Calu3 (cell line): ENCODE measurements at regions of chr4 and their contacts with region 1.

Region 1: GRCh38 chr4:74133786-74134499 is 24.0 kb upstream of the MTHFD2L start:
- DNase-seq: peak; percentile 77
- H3K4me3 Mint-ChIP-seq: peak overlapping the region; percentile 30
- H3K27ac Mint-ChIP-seq: peak overlapping the region; percentile 24
- H3K4me1 Mint-ChIP-seq: peaks cover 25% of the 10 kb centered on the region
- H3K27me3 Mint-ChIP-seq: no peaks in the 10 kb centered on the region
- CTCF ChIP-seq: peak; percentile 38

Region 2: GRCh38 chr4:73662709-73663546 is 471.0 kb before region 1 on chr4:
- CTCF ChIA-PET with region 1: no interaction called
- intact Hi-C with region 1: loop called (anchors 5 kb)
- DNase-seq: no peak
- H3K4me3 Mint-ChIP-seq: no peak overlapping the region
- H3K27ac Mint-ChIP-seq: peak overlapping the region; percentile 50
- H3K4me1 Mint-ChIP-seq: peaks cover 33% of the 10 kb centered on the region
- H3K27me3 Mint-ChIP-seq: no peaks in the 10 kb centered on the region
- CTCF ChIP-seq: peak; percentile 28

Region 3: DNA sequence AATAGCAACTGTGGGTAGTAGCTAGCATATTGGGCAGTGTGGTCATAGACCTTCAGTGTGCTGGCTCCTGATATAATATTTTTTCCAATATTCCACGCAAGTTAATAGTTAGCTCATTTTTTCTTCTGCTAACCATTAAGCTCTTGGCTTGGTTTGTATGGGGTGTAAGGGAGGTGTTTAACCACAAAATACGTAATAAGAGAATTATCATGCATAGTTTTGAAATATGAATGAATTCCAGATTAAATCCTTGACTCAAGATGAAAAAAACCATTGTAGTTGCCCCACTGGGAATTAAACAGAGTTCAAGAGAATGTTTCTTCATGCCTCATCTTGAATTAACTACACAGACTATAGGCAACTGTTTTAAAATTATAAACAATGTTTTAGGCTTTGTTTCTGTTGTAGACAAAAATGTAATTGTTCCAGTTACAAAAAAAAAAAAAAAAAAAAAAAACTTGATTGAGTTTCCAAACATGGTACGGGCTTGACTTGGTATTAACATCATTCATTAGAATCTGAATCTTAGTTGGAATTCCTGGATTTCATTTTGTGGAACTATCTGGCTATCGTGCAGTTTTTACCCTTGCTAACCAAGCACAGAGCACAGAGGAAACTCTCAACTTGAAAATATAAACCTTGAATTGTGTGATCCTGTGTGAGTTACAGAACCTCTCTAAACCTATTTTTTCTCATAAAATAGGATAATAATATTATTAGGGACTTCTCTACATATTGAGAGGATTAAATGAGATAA is 236.4 kb before region 1 on chr4:
- CTCF ChIA-PET with region 1: no interaction called
- intact Hi-C with region 1: no loop called
- DNase-seq: peak; percentile 10
- H3K4me3 Mint-ChIP-seq: no peak overlapping the region
- H3K27ac Mint-ChIP-seq: no peak overlapping the region
- H3K4me1 Mint-ChIP-seq: peaks cover 61% of the 10 kb centered on the region
- H3K27me3 Mint-ChIP-seq: no peaks in the 10 kb centered on the region
- CTCF ChIP-seq: no peak

Region 4: GRCh38 chr4:73922766-73923630 is 210.9 kb before region 1 on chr4:
- CTCF ChIA-PET with region 1: no interaction called
- intact Hi-C with region 1: loop called (anchors 10 kb)
- DNase-seq: peak; percentile 41
- H3K4me3 Mint-ChIP-seq: no peak overlapping the region
- H3K27ac Mint-ChIP-seq: peak overlapping the region; percentile 23
- H3K4me1 Mint-ChIP-seq: peaks cover 22% of the 10 kb centered on the region
- H3K27me3 Mint-ChIP-seq: no peaks in the 10 kb centered on the region
- CTCF ChIP-seq: no peak

Region 5: DNA sequence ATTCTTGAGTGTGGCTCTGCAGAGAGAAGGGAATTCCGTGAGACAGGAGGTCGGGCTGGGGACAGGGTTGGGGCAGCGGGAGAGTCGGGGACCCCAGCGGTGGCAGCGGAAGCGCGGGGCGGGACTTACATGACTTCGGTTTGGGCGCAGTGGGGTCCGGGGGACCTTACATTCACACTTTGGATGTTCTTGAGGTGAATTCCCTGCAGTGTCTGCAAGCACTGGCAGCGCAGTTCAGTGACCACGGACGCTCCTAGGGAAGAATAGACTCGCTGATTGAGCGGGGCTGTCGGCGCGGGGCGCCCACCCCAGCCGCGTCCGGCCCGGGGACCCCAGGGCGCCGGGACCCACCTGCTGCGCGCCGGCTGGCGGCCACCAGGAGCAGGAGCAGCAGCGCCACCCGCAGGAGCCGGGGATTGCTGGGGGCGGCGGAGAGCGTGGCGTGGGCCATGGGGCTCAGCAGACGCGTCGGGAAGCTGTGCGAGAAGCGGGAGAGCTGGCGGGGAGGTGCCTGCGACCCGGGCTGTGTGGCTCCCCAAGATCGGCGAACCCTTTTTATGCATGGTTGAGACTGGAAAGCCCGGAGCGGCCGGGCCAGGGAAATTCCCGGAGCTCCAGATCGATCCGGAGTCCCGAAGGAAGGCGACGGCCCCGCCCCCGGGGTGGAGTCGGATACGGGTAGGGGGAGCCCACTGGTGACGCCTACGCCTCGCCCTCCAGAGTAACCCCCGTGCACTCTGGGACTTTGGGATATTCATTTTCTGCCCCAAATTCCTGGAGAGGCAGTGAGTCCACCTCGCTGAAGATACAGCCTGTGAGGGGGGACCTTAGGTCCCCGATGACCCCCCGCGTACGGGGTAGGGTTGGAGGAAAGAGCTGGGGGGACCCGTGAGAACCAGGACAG is 95.5 kb before region 1 on chr4 and contains the start of gene CXCL3:
- CTCF ChIA-PET with region 1: interaction called, 6 read pairs
- intact Hi-C with region 1: loop called (anchors 1 kb)
- DNase-seq: peak; percentile 94
- H3K4me3 Mint-ChIP-seq: peak within 1 kb of the TSS; percentile 84
- H3K27ac Mint-ChIP-seq: peak within 1 kb of the TSS; percentile 91
- H3K4me1 Mint-ChIP-seq: peaks cover 42% of the 10 kb centered on the region
- H3K27me3 Mint-ChIP-seq: no peaks in the 10 kb centered on the region
- CTCF ChIP-seq: no peak
- total RNA-seq, gene CXCL3: 80.8 and 153 TPM in 2 replicates

Region 6: GRCh38 chr4:74109116-74109869 is 24.6 kb before region 1 on chr4:
- CTCF ChIA-PET with region 1: interaction called, 13 read pairs
- intact Hi-C with region 1: no loop called
- DNase-seq: peak; percentile 71
- H3K4me3 Mint-ChIP-seq: peak overlapping the region; percentile 52
- H3K27ac Mint-ChIP-seq: peak overlapping the region; percentile 99
- H3K4me1 Mint-ChIP-seq: peaks cover 42% of the 10 kb centered on the region
- H3K27me3 Mint-ChIP-seq: no peaks in the 10 kb centered on the region
- CTCF ChIP-seq: no peak

Region 7: GRCh38 chr4:74189331-74190043 is 55.5 kb after region 1 on chr4:
- CTCF ChIA-PET with region 1: no interaction called
- intact Hi-C with region 1: no loop called
- DNase-seq: no peak
- H3K4me3 Mint-ChIP-seq: no peak overlapping the region
- H3K27ac Mint-ChIP-seq: no peak overlapping the region
- H3K4me1 Mint-ChIP-seq: no peaks in the 10 kb centered on the region
- H3K27me3 Mint-ChIP-seq: no peaks in the 10 kb centered on the region
- CTCF ChIP-seq: peak; percentile 48

Region 8: DNA sequence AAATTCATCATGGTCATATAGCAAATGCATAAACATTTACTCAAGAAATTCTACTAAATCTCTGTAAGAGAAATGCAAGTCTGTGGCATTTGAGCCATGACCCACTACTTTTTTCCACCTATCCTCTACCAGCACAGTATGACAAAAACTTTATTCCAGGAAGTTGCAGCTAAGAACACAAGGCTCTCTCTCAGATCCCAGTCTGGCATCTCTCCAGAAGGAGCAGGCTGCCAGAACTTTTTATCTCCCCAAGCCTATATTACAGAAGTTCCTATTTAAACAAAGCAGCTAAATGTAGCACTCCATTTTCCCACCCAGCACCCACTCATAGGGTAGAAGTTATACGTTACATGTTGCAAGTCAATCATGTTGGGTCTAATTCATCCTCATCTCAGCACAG is 125.0 kb after region 1 on chr4:
- CTCF ChIA-PET with region 1: no interaction called
- intact Hi-C with region 1: no loop called
- DNase-seq: peak; percentile 30
- H3K4me3 Mint-ChIP-seq: no peak overlapping the region
- H3K27ac Mint-ChIP-seq: no peak overlapping the region
- H3K4me1 Mint-ChIP-seq: peaks cover 8% of the 10 kb centered on the region
- H3K27me3 Mint-ChIP-seq: no peaks in the 10 kb centered on the region
- CTCF ChIP-seq: no peak

Region 9: DNA sequence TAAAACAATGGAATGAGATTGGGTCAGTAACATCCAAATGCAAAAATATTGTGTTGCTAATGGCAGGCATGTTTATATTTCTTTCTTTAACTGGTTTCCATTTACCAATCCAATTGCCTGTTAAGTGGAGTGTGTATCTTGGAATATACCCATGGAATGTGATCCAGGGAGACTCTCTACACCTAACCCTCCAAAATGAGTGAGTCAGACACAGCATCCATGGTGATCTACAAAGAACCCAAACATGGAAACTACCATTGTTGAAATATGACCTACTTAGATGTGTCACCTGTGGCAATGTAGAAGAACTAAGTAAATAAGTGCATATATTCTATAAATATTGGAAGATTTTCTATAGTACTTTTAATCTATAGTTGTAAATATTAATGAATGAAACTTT is 421.3 kb after region 1 on chr4:
- CTCF ChIA-PET with region 1: no interaction called
- intact Hi-C with region 1: no loop called
- DNase-seq: no peak
- H3K4me3 Mint-ChIP-seq: no peak overlapping the region
- H3K27ac Mint-ChIP-seq: no peak overlapping the region
- H3K4me1 Mint-ChIP-seq: no peaks in the 10 kb centered on the region
- H3K27me3 Mint-ChIP-seq: no peaks in the 10 kb centered on the region
- CTCF ChIP-seq: no peak